Activated naive CD4-positive, alpha-beta T cell treated with anti-CD3 and anti-CD28 coated beads for 36 hours (primary cell): ENCODE measurements at regions of chr10 and their contacts with region 1.

Region 1: DNA sequence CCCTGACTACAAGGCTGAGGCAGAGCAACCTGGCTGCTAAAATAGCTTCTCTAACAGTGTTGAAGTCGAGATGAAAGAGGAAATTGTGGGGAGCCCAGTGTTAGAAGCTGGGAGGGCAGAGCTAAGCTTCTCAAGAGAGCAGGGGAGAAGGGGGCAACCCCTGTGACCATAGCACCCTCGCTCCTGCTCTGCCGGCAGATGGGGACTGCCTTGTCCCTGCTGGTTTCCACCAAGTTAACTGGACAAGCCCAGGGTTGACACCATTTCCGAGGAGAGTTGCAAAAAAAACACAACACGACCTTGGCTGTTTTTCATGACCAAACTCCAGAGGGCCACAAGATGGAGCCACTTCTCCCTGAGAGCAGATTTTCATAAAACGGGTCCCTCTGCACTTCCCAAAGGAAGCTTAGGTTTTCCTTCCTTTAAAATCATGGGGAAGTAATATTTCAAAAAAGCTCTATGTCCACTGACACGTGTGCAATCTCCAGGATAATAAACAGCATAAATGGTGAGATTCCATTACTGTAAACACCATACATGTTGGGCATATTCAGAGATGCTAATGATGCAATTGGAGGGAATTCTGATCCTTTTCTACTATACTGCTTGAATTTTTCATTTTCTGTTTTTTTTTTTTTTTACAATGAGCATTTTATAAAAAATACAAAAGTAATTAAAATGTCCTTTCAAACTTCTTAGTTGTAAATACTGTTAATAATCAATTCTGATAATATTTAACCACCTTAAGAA is 140.4 kb downstream of the PIP4K2A start:
- DNase-seq: peak; percentile 44
- H3K4me3 Mint-ChIP-seq: no peak overlapping the region
- H3K27ac Mint-ChIP-seq: peak overlapping the region; percentile 1
- H3K4me1 Mint-ChIP-seq: peaks cover 37% of the 10 kb centered on the region
- H3K27me3 Mint-ChIP-seq: no peaks in the 10 kb centered on the region

Region 2: DNA sequence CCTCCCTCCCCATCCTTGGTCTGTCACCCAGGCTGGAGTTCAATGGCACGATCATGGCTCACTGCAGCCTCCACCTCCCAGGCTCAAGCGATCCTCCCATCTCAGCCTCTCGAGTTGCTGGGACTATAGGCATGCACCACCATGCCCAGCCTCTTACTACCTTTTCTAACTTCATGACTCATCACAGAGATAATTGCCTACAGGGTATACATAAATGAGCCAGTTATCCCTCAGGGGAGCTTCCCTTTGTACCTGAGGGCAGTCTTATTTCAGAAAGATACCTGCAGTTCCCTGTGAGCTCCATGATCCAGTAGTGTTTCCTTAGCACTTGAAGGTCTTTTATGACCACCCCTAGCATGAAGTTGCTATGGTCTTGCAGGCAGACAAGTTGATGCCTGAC is 476.3 kb before region 1 on chr10:
- CTCF ChIA-PET with region 1: no interaction called
- intact Hi-C with region 1: no loop called
- DNase-seq: no peak
- H3K4me3 Mint-ChIP-seq: no peak overlapping the region
- H3K27ac Mint-ChIP-seq: no peak overlapping the region
- H3K4me1 Mint-ChIP-seq: no peaks in the 10 kb centered on the region
- H3K27me3 Mint-ChIP-seq: no peaks in the 10 kb centered on the region

Region 3: DNA sequence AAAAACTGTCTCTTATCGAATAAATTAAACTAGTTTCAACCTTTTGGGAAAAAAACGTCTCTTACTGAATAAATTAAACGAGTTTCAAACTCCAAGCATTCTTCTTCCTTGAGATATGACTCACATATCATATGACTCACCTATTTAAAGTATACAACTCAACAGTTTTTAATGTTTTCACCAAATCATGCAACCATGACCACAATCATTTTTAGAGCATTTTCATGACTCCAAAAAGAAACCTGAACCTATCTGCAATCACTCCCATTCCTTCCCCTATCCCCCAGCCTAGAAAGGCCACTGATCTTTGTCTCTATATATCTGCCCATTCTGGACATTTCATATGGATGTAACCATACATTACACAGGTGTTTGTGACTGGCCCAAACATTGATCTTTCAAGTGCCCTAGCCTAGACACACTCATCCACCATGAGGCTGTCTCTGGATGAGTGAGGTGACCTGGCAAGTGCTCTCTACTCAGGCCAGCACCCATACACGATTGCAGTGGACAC is 25.1 kb after region 1 on chr10:
- CTCF ChIA-PET with region 1: interaction called, 9 read pairs
- intact Hi-C with region 1: loop called (anchors 2 kb)
- DNase-seq: no peak
- H3K4me3 Mint-ChIP-seq: no peak overlapping the region
- H3K27ac Mint-ChIP-seq: peak overlapping the region; percentile 9
- H3K4me1 Mint-ChIP-seq: peaks cover 62% of the 10 kb centered on the region
- H3K27me3 Mint-ChIP-seq: no peaks in the 10 kb centered on the region

Region 4: GRCh38 chr10:22736134-22736533 is 162.1 kb after region 1 on chr10:
- CTCF ChIA-PET with region 1: interaction called, 10 read pairs
- intact Hi-C with region 1: no loop called
- DNase-seq: no peak
- H3K4me3 Mint-ChIP-seq: no peak overlapping the region
- H3K27ac Mint-ChIP-seq: no peak overlapping the region
- H3K4me1 Mint-ChIP-seq: no peaks in the 10 kb centered on the region
- H3K27me3 Mint-ChIP-seq: no peaks in the 10 kb centered on the region

Region 5: GRCh38 chr10:22849077-22849805 is 275.2 kb after region 1 on chr10:
- CTCF ChIA-PET with region 1: interaction called, 3 read pairs
- intact Hi-C with region 1: loop called (anchors 5 kb)
- DNase-seq: peak; percentile 49
- H3K4me3 Mint-ChIP-seq: peak overlapping the region; percentile 23
- H3K27ac Mint-ChIP-seq: no peak overlapping the region
- H3K4me1 Mint-ChIP-seq: peaks cover 7% of the 10 kb centered on the region
- H3K27me3 Mint-ChIP-seq: no peaks in the 10 kb centered on the region